ENCODE measurements at regions of chr16 and their contacts with region 1.

Region 1: GRCh38 chr16:4402439-4403132 is 13.8 kb downstream of the CORO7 start:
- DNase-seq: peak; percentile 89 to 94 (median 92)
- H3K4me3 ChIP-seq: no peak overlapping the region
- H3K27ac ChIP-seq: no peak overlapping the region
- H3K4me1 ChIP-seq: peaks cover 0 to 4% (median 2%) of the 10 kb centered on the region in 3 donors
- H3K27me3 ChIP-seq: no peaks in the 10 kb centered on the region
- CTCF ChIP-seq: peak; percentile 95

Region 2: DNA sequence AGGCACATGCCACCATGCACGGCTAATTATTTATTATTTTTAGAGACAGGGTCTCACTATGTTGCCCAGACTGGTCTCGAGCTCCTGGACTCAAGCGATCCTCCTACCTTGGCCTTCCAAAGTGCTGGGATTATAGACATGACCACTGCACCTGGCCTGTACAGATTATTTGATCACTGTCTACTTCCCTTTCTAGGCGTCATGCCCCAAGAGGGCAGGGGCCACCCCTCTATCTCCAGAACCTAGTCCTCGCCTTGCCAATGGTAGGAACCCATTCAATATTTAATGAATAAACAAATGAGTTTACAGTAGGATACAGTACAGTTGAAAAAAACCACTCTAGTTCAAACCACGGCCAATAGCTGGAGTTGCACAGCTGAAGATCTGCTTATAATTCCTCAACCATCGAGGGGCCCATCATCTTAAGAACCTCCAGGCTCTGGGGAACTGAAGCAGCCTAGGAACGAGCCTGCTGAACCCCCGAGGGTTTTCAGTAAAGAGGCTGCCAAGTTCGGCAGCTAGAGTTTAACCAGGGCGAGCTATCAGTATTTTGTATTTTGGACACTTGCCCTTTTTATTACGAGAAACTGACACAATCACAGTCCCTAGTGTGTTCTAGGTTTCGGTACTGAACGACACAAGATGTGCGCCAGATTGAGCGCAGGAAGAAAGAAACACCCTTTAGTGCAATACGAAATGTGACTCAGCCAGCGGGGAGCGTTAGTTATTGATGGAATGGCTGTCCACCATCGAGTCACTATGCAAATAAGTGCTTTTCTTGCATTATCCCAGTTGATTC is 301.0 kb before region 1 on chr16:
- intact Hi-C with region 1: no loop called
- DNase-seq: no peak
- H3K4me3 ChIP-seq: no peak overlapping the region
- H3K27ac ChIP-seq: no peak overlapping the region
- H3K4me1 ChIP-seq: peaks cover 0 to 3% (median 2%) of the 10 kb centered on the region in 3 donors
- H3K27me3 ChIP-seq: no peaks in the 10 kb centered on the region
- CTCF ChIP-seq: no peak

Region 3: GRCh38 chr16:4288148-4288921 is 114.3 kb before region 1 on chr16:
- intact Hi-C with region 1: loop called (anchors 10 kb)
- DNase-seq: peak; percentile 72 to 89 (median 82)
- H3K4me3 ChIP-seq: peak overlapping the region in 1 of 3 donors; percentile 5
- H3K27ac ChIP-seq: no peak overlapping the region
- H3K4me1 ChIP-seq: peaks cover 0 to 11% (median 0%) of the 10 kb centered on the region in 3 donors
- H3K27me3 ChIP-seq: no peaks in the 10 kb centered on the region
- CTCF ChIP-seq: peak; percentile 80

Region 4: GRCh38 chr16:4339909-4340308 is 62.7 kb before region 1 on chr16:
- intact Hi-C with region 1: no loop called
- DNase-seq: peak; percentile 72 to 93 (median 80)
- H3K4me3 ChIP-seq: no peak overlapping the region
- H3K27ac ChIP-seq: no peak overlapping the region
- H3K4me1 ChIP-seq: peaks cover 0 to 9% (median 0%) of the 10 kb centered on the region in 3 donors
- H3K27me3 ChIP-seq: no peaks in the 10 kb centered on the region
- CTCF ChIP-seq: no peak

Region 5: DNA sequence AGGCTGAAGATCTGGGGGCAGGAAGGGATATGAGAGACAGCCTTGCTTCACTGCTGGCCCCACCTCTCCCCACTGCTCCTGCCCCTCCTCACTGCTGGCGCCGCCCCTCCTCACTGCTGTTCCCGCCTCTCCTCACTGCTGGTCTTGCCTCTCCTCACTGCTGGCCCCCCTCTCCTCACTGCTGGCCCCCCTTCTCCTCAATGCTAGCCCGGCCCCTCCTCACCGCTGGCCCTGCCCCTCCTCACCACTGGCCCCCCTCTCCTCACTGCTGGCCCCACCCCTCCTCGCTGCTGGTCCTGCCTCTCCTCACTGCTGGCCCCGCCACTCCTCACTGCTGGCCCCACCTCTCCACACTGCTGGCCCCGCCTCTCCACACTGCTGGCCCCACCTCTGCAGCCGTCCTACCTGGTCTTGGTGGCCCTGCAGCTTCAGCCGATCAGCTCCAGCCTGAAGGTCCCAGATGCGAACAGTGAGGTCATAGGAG is 42.0 kb before region 1 on chr16:
- intact Hi-C with region 1: loop called (anchors 5 kb)
- DNase-seq: peak in 4 of 5 donors; percentile 62 to 84 (median 69)
- H3K4me3 ChIP-seq: no peak overlapping the region
- H3K27ac ChIP-seq: no peak overlapping the region
- H3K4me1 ChIP-seq: no peaks in the 10 kb centered on the region
- H3K27me3 ChIP-seq: no peaks in the 10 kb centered on the region
- CTCF ChIP-seq: no peak

Measured in kidney (tissue), 22 donors.